ENCODE measurements at regions of chr18 and their contacts with region 1.

Region 1: DNA sequence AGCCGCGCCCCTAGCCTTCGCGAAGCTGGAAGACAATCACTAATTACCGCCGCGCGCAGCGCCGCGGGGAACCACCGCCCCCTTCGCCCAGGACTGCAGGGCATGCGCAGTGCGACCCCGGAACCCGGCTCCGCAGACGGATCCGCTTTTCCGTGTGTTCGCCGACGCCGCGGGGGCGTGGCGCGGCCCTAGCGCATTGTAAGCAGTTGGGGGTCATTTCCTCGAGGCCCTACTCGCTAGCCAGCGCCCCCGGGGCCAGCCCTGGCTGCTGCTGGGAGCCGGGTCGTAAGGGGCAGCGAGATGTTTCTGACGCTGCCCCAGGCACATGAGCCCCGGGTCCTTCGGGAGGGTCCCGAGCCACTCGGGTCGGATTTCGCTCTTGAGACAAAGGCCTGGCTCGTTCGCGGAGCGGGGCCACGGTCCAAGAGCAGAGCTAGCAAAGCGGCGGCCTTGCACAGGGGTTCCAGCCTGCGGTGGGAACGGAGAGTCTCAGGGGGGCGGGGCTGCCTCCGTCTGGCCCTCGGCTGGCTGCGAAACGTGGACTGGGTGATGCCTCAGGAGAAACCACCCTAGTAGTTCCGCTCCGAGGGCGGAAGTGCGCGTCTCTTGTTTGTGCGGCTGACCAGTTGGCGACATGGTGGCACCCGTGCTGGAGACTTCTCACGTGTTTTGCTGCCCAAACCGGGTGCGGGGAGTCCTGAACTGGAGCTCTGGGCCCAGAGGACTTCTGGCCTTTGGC is at the starts of genes ELP2 and SLC39A6:
- DNase-seq: peak; percentile 94
- H3K4me3 Mint-ChIP-seq: peak within 1 kb of the TSS; percentile 92
- H3K27ac Mint-ChIP-seq: peak within 1 kb of the TSS; percentile 95
- H3K4me1 Mint-ChIP-seq: peaks cover 56% of the 10 kb centered on the region
- H3K27me3 Mint-ChIP-seq: no peaks in the 10 kb centered on the region
- total RNA-seq, gene ELP2: 54.5 to 60.1 TPM
- total RNA-seq, gene SLC39A6: 22.9 to 24.8 TPM

Region 2: GRCh38 chr18:35972197-35973052 is 157.0 kb before region 1 on chr18 and contains the start of gene RMP24:
- CTCF ChIA-PET with region 1: no interaction called
- POLR2A ChIA-PET with region 1: interaction called, 17 read pairs
- DNase-seq: peak; percentile 95
- H3K4me3 Mint-ChIP-seq: peak within 1 kb of the TSS; percentile 94
- H3K27ac Mint-ChIP-seq: peak within 1 kb of the TSS; percentile 94
- H3K4me1 Mint-ChIP-seq: peaks cover 49% of the 10 kb centered on the region
- H3K27me3 Mint-ChIP-seq: no peaks in the 10 kb centered on the region

Region 3: GRCh38 chr18:36067055-36067957 is 62.2 kb before region 1 on chr18 and contains the start of gene RPRD1A:
- CTCF ChIA-PET with region 1: interaction called, 3 read pairs
- POLR2A ChIA-PET with region 1: interaction called, 17 read pairs
- DNase-seq: peak; percentile 97
- H3K4me3 Mint-ChIP-seq: peak within 1 kb of the TSS; percentile 92
- H3K27ac Mint-ChIP-seq: peak within 1 kb of the TSS; percentile 83
- H3K4me1 Mint-ChIP-seq: peaks cover 32% of the 10 kb centered on the region
- H3K27me3 Mint-ChIP-seq: peaks cover 3% of the 10 kb centered on the region
- total RNA-seq, gene RPRD1A: 25.1 to 27.6 TPM

Region 4: GRCh38 chr18:36078751-36079529 is 50.5 kb before region 1 on chr18:
- CTCF ChIA-PET with region 1: no interaction called
- POLR2A ChIA-PET with region 1: no interaction called
- DNase-seq: no peak
- H3K4me3 Mint-ChIP-seq: no peak overlapping the region
- H3K27ac Mint-ChIP-seq: no peak overlapping the region
- H3K4me1 Mint-ChIP-seq: peaks cover 16% of the 10 kb centered on the region
- H3K27me3 Mint-ChIP-seq: peaks cover 14% of the 10 kb centered on the region

Region 5: GRCh38 chr18:36149514-36150289 is 20.2 kb after region 1 on chr18:
- CTCF ChIA-PET with region 1: interaction called, 3 read pairs
- POLR2A ChIA-PET with region 1: interaction called, 16 read pairs
- DNase-seq: no peak
- H3K4me3 Mint-ChIP-seq: no peak overlapping the region
- H3K27ac Mint-ChIP-seq: no peak overlapping the region
- H3K4me1 Mint-ChIP-seq: peaks cover 17% of the 10 kb centered on the region
- H3K27me3 Mint-ChIP-seq: no peaks in the 10 kb centered on the region

Region 6: GRCh38 chr18:36229188-36229587 is 99.7 kb after region 1 on chr18:
- CTCF ChIA-PET with region 1: no interaction called
- POLR2A ChIA-PET with region 1: no interaction called
- DNase-seq: no peak
- H3K4me3 Mint-ChIP-seq: no peak overlapping the region
- H3K27ac Mint-ChIP-seq: no peak overlapping the region
- H3K4me1 Mint-ChIP-seq: no peaks in the 10 kb centered on the region
- H3K27me3 Mint-ChIP-seq: peaks cover 20% of the 10 kb centered on the region

Measured in activated CD4-positive, alpha-beta memory T cell treated with anti-CD3 and anti-CD28 coated beads, Interleukin-2, amount 10 ng/mL, durations not matched to agents 7 days and 5 days (primary cell).